CD8-positive, alpha-beta T cell (primary cell): ENCODE measurements at regions of chr16 and their contacts with region 1.

Region 1: DNA sequence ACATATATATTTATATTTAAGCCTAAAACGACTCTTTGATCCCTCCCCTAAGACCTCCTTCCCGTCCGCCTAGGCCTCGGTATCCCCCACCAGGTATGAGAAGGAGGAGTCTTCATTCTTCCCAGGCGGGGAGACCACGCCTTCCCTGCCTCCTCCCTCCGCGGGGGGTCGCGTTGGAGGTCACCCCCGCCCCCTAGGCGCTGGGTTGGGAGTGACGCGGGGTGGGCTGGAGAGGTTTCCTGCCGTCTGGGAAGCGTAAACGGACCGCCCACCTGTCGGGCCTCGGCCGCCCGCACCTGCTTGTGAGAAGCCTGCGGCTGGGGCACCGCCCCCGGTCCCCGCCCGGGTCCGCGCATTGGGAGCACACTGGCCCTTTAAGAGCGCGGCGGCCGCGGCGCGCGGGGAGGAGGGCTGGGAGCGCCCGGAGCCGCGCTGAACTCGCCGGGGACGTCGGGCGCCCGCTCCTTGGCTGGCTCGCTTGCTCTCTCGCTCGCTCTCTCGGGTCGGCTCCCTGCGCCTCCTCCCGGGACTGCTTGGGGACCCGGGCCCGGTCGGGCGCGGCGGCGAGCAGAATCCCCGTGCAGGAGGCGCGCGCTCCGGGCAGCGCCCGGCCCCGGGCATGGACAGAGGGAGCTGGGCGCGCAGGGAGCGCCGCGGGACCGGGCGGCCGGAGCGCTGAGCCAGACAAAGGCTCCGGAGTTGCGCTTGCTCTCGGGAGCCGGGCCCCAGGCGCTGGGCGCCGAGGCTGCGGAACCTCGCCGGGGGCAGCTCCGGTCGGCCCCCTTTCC is at the start of gene MMP15:
- DNase-seq: peak in 8 of 9 experiments; percentile 39 to 71 (median 60)
- ATAC-seq: peak; percentile 65
- H3K4me3 ChIP-seq: peak within 1 kb of the TSS; percentile 60 to 66
- H3K4me3 Mint-ChIP-seq: peak within 1 kb of the TSS; percentile 90
- H3K27ac ChIP-seq: peak within 1 kb of the TSS in 1 of 2 experiments; percentile 18
- H3K27ac Mint-ChIP-seq: peak within 1 kb of the TSS; percentile 83
- H3K4me1 ChIP-seq: peaks cover 8% of the 10 kb centered on the region
- H3K4me1 Mint-ChIP-seq: peaks cover 13% of the 10 kb centered on the region
- H3K27me3 ChIP-seq: peaks cover 0 to 10% of the 10 kb centered on the region in 2 experiments
- H3K27me3 Mint-ChIP-seq: peaks cover 6% of the 10 kb centered on the region
- CTCF ChIP-seq: no peak
- total RNA-seq, gene MMP15: 0.19 to 0.92 TPM

Region 2: DNA sequence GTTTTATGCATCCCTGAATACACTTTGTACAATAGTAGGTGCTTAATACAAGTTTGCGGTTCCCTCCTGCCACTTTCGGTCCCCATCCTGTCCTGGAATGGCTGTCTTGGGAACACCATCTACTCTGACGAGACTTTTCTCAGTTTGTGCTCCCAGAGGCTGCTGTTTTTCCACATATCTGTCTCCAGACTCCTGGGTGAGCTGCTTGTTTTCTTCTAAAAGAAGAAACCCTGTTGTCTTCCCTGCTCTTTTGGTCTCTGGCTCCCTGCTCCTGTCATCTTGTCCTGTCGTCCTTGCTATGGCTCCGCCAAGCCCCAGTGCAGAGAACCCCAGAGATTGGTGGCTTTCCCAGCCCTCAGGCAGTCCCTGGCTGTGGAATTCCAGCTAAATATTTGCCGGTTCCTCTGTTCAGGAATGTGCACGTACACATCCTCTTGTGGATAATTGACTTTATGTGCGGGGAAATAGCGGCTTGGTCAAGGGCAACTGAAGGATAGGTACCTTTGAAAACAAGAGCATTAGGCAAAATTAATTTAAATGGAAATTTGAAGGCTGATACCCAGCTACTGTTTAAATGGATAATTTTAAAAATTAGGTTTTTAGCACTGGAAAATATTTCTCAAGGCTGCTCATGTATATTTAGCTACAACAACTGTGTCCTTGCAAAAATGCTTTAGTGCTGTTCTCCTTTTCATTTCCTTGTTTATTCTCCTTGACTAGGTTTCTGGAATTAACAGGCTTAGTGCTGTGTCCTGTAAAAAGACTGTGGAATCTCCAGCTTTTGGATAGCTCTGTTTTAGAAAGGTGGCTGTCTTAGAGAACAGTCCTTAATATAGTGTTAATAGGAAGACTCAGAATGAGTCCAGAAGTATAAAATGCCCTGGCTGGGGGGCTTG is 1210.8 kb before region 1 on chr16:
- CTCF ChIA-PET with region 1: no interaction called
- POLR2A ChIA-PET with region 1: no interaction called
- intact Hi-C with region 1: no loop called
- DNase-seq: no peak
- ATAC-seq: no peak
- H3K4me3 ChIP-seq: no peak overlapping the region
- H3K4me3 Mint-ChIP-seq: no peak overlapping the region
- H3K27ac ChIP-seq: no peak overlapping the region
- H3K27ac Mint-ChIP-seq: no peak overlapping the region
- H3K4me1 ChIP-seq: no peaks in the 10 kb centered on the region
- H3K4me1 Mint-ChIP-seq: no peaks in the 10 kb centered on the region
- H3K27me3 ChIP-seq: no peaks in the 10 kb centered on the region
- H3K27me3 Mint-ChIP-seq: no peaks in the 10 kb centered on the region
- CTCF ChIP-seq: no peak

Region 3: GRCh38 chr16:57899771-57900661 is 125.5 kb before region 1 on chr16:
- CTCF ChIA-PET with region 1: interaction called, 13 read pairs
- POLR2A ChIA-PET with region 1: no interaction called
- intact Hi-C with region 1: no loop called
- DNase-seq: peak; percentile 59 to 89 (median 82)
- ATAC-seq: peak; percentile 76
- H3K4me3 ChIP-seq: no peak overlapping the region
- H3K4me3 Mint-ChIP-seq: no peak overlapping the region
- H3K27ac ChIP-seq: no peak overlapping the region
- H3K27ac Mint-ChIP-seq: no peak overlapping the region
- H3K4me1 ChIP-seq: no peaks in the 10 kb centered on the region
- H3K4me1 Mint-ChIP-seq: peaks cover 3% of the 10 kb centered on the region
- H3K27me3 ChIP-seq: no peaks in the 10 kb centered on the region
- H3K27me3 Mint-ChIP-seq: peaks cover 20% of the 10 kb centered on the region
- CTCF ChIP-seq: peak; percentile 92

Region 4: DNA sequence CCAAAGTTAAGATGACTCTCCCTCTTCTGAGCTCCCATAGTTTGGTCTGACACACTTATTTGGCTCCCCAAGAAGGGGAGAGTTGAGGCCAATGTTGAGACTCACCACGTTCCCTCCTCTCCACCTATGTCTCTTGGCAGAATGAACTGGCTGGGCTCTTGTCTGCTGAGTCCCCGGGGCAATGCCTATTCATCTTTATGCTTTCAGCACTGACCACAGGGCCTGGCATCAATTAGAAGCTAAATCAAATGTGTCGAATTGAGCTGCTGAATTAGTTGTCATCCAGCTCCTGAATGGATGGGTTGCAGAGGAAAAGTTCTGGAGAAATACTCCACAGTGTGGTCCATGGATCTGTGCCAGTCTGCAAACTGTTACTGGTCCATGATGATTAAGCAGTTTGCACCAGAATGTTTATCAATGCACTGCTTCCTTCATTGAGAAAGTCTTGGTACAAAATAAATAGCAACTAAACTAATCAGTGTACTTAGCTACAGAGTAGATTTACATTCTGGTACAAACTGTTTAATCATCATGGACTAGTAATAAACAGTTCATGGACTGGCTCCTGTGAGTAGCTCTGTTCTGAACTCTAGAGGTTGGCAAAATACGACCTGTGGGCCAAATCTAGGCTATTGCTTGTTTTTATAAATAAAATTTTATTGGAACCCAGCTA is 59.3 kb before region 1 on chr16:
- CTCF ChIA-PET with region 1: no interaction called
- POLR2A ChIA-PET with region 1: no interaction called
- intact Hi-C with region 1: no loop called
- DNase-seq: no peak
- ATAC-seq: no peak
- H3K4me3 ChIP-seq: no peak overlapping the region
- H3K4me3 Mint-ChIP-seq: no peak overlapping the region
- H3K27ac ChIP-seq: no peak overlapping the region
- H3K27ac Mint-ChIP-seq: no peak overlapping the region
- H3K4me1 ChIP-seq: no peaks in the 10 kb centered on the region
- H3K4me1 Mint-ChIP-seq: no peaks in the 10 kb centered on the region
- H3K27me3 ChIP-seq: no peaks in the 10 kb centered on the region
- H3K27me3 Mint-ChIP-seq: no peaks in the 10 kb centered on the region
- CTCF ChIP-seq: no peak

Region 5: DNA sequence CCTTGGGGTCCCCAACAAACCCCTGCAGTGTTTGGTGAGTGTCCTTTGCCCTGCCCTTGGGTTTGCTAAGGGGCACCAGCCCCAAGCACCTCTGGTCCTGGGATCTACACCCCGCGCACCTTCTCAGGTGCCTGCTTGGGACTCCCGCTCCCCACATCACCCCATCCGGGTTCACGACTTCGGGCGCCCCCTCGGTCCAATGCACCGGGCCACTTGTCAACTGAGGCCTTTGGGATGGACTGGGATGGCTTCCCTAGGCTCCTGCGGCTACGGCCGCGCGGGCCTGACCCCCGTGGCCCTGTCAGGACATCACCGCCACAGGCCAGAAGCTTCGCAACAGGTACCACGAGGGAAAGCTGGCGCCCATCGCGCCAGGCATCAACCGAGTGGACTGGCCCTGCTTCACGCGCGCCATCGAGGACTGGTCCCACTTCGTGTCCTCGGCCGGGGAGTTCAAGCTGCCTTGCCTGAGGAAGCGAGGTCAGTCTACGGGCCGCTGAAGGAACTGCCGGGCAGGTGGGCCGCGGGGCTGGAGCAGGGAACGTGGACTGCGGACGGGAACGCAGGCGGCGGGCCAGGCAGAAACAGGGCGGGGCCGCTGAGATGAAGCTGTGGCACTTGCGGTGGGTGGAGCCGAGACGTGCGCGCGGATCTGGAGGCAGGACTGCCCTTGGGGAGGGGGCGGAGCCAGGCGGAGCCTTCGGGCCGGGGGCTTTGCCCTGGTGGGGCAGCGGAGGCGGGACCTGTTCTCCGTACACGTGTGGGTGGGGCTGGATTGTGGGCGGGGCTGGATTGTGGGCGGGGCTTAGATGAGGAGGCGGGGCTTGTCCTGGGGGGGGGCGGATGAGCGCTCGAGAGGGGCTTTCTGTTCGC is 41.0 kb before region 1 on chr16:
- CTCF ChIA-PET with region 1: no interaction called
- POLR2A ChIA-PET with region 1: no interaction called
- intact Hi-C with region 1: loop called in 1 of 2 experiments (anchors 2 kb)
- DNase-seq: peak; percentile 81 to 96 (median 90)
- ATAC-seq: peak; percentile 96
- H3K4me3 ChIP-seq: peak overlapping the region; percentile 64 to 83
- H3K4me3 Mint-ChIP-seq: peak overlapping the region; percentile 88
- H3K27ac ChIP-seq: peak overlapping the region in 1 of 2 experiments; percentile 36
- H3K27ac Mint-ChIP-seq: peak overlapping the region; percentile 37
- H3K4me1 ChIP-seq: peaks cover 12% of the 10 kb centered on the region
- H3K4me1 Mint-ChIP-seq: peaks cover 16% of the 10 kb centered on the region
- H3K27me3 ChIP-seq: no peaks in the 10 kb centered on the region
- H3K27me3 Mint-ChIP-seq: no peaks in the 10 kb centered on the region
- CTCF ChIP-seq: no peak

Region 6: GRCh38 chr16:58198022-58198683 is 172.6 kb after region 1 on chr16 and contains the start of gene CSNK2A2:
- CTCF ChIA-PET with region 1: no interaction called
- POLR2A ChIA-PET with region 1: no interaction called
- intact Hi-C with region 1: loop called (anchors 2 to 5 kb)
- DNase-seq: peak; percentile 42 to 87 (median 69)
- ATAC-seq: peak; percentile 94
- H3K4me3 ChIP-seq: peak within 1 kb of the TSS; percentile 56 to 67
- H3K4me3 Mint-ChIP-seq: peak within 1 kb of the TSS; percentile 89
- H3K27ac ChIP-seq: no peak within 1 kb of the TSS
- H3K27ac Mint-ChIP-seq: peak within 1 kb of the TSS; percentile 88
- H3K4me1 ChIP-seq: peaks cover 26% of the 10 kb centered on the region
- H3K4me1 Mint-ChIP-seq: peaks cover 39% of the 10 kb centered on the region
- H3K27me3 ChIP-seq: no peaks in the 10 kb centered on the region
- H3K27me3 Mint-ChIP-seq: peaks cover 7% of the 10 kb centered on the region
- CTCF ChIP-seq: no peak
- total RNA-seq, gene CSNK2A2: 53.3 to 58.4 TPM

Region 7: DNA sequence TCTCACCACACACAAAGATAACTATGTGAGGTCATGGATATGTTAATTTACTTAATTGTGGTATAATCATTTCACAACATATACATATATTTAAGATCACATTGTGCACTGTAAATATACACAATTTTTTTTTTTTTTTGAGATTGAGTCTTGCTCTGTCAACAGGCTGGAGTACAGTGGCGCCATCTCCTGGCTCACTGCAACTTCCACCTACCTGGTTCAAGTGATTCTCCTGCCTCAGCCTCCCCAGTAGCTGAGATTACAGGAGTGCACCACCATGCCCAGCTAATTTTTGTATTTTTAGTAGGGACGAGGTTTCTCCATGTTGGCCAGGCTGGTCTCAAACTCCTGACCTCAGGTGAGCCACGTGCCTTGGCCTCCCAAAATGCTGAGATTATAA is 280.8 kb after region 1 on chr16:
- CTCF ChIA-PET with region 1: interaction called, 3 read pairs
- POLR2A ChIA-PET with region 1: no interaction called
- intact Hi-C with region 1: loop called in 1 of 2 experiments (anchors 1 kb)
- DNase-seq: peak in 7 of 9 experiments; percentile 4 to 63 (median 47)
- ATAC-seq: no peak
- H3K4me3 ChIP-seq: no peak overlapping the region
- H3K4me3 Mint-ChIP-seq: no peak overlapping the region
- H3K27ac ChIP-seq: no peak overlapping the region
- H3K27ac Mint-ChIP-seq: no peak overlapping the region
- H3K4me1 ChIP-seq: no peaks in the 10 kb centered on the region
- H3K4me1 Mint-ChIP-seq: no peaks in the 10 kb centered on the region
- H3K27me3 ChIP-seq: no peaks in the 10 kb centered on the region
- H3K27me3 Mint-ChIP-seq: peaks cover 7% of the 10 kb centered on the region
- CTCF ChIP-seq: peak; percentile 56

Region 8: GRCh38 chr16:58487566-58488351 is 462.2 kb after region 1 on chr16:
- CTCF ChIA-PET with region 1: no interaction called
- POLR2A ChIA-PET with region 1: no interaction called
- intact Hi-C with region 1: loop called in 1 of 2 experiments (anchors 2 kb)
- DNase-seq: peak; percentile 42 to 83 (median 73)
- ATAC-seq: peak; percentile 83
- H3K4me3 ChIP-seq: no peak overlapping the region
- H3K4me3 Mint-ChIP-seq: no peak overlapping the region
- H3K27ac ChIP-seq: no peak overlapping the region
- H3K27ac Mint-ChIP-seq: no peak overlapping the region
- H3K4me1 ChIP-seq: no peaks in the 10 kb centered on the region
- H3K4me1 Mint-ChIP-seq: no peaks in the 10 kb centered on the region
- H3K27me3 ChIP-seq: peaks cover 0 to 7% of the 10 kb centered on the region in 2 experiments
- H3K27me3 Mint-ChIP-seq: peaks cover 3% of the 10 kb centered on the region
- CTCF ChIP-seq: peak; percentile 85